WTC11 (cell line): ENCODE measurements at regions of chr17 and their contacts with region 1.

Region 1: DNA sequence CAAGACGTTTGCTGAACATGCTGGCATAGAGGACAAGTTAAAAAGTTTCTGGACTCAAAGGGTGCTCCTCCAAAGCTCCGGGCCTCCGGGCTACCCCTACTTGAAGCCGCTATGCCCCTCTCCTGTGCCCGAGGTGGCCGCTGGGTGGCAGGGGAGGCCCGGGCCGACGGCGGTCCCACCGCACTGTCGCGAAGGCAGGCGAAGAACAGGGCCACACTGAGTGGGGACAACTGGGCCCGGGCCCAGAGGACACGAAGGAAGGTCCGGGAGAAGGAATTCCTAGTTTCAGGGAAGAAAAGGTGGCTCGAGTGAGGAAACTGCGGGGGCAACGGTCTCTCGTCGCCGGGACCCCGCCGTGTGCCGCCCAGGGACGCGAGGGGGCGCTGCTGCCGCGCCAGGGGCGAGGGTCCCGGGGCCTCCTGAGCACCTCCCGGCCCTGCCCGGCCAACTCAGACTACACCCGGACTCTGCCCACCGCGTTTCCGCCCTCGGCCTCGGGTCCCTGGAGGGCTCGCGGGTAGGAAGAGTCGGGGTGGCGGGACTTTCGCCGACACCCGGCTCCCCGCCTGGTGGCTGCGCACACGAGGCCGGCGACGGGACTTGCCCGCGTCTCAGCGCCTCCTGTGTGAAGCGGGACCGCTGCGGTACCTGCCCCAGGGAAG is 885 bp upstream of the CHCT1 start:
- DNase-seq: peak; percentile 81
- ATAC-seq: peak; percentile 91
- H3K4me3 Mint-ChIP-seq: peak overlapping the region; percentile 84
- H3K27ac Mint-ChIP-seq: no peak overlapping the region
- H3K4me1 Mint-ChIP-seq: peaks cover 16% of the 10 kb centered on the region
- H3K27me3 Mint-ChIP-seq: peaks cover 21% of the 10 kb centered on the region
- CTCF ChIP-seq: peak; percentile 96

Region 2: GRCh38 chr17:60231234-60231633 is 190.2 kb before region 1 on chr17:
- CTCF ChIA-PET with region 1: interaction called, 10 read pairs
- POLR2A ChIA-PET with region 1: no interaction called
- DNase-seq: no peak
- ATAC-seq: 0 out of 2 replicates have a peak, but pooled peaks have one; percentile 28
- H3K4me3 Mint-ChIP-seq: no peak overlapping the region
- H3K27ac Mint-ChIP-seq: peak overlapping the region; percentile 82
- H3K4me1 Mint-ChIP-seq: peaks cover 12% of the 10 kb centered on the region
- H3K27me3 Mint-ChIP-seq: no peaks in the 10 kb centered on the region
- CTCF ChIP-seq: no peak

Region 3: GRCh38 chr17:60361889-60362288 is 59.5 kb before region 1 on chr17:
- CTCF ChIA-PET with region 1: no interaction called
- POLR2A ChIA-PET with region 1: no interaction called
- DNase-seq: no peak
- ATAC-seq: no peak
- H3K4me3 Mint-ChIP-seq: no peak overlapping the region
- H3K27ac Mint-ChIP-seq: no peak overlapping the region
- H3K4me1 Mint-ChIP-seq: peaks cover 13% of the 10 kb centered on the region
- H3K27me3 Mint-ChIP-seq: no peaks in the 10 kb centered on the region
- CTCF ChIP-seq: no peak

Region 4: GRCh38 chr17:60392042-60392844 is 29.2 kb before region 1 on chr17 and contains the start of gene USP32:
- CTCF ChIA-PET with region 1: interaction called, 10 read pairs
- POLR2A ChIA-PET with region 1: interaction called, 7 read pairs
- DNase-seq: peak; percentile 98
- ATAC-seq: peak; percentile 95
- H3K4me3 Mint-ChIP-seq: peak within 1 kb of the TSS; percentile 98
- H3K27ac Mint-ChIP-seq: peak within 1 kb of the TSS; percentile 98
- H3K4me1 Mint-ChIP-seq: peaks cover 45% of the 10 kb centered on the region
- H3K27me3 Mint-ChIP-seq: no peaks in the 10 kb centered on the region
- CTCF ChIP-seq: no peak
- total RNA-seq, gene USP32: 91.7 to 103 TPM (median 96.1 TPM) in 3 replicates

Region 5: DNA sequence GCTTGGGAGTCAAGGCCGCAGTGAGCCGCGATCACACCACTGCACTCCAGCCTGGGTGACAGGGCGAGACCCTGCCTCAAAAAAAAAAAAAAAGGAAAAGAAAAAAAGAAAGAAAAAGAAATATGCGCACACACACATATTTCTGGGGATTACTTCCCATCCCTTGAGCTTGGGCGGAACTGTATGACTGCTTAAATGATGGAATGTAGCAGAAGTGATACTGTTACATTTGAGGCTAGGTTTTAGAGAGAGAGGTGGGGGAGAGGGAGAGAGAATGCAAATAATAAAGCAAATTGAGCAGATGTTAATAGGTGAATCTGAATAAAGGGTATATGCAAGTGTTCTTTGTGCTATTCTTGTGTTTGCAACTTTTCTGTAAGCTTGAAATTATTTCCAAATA is 17.4 kb before region 1 on chr17:
- CTCF ChIA-PET with region 1: interaction called, 15 read pairs
- POLR2A ChIA-PET with region 1: no interaction called
- DNase-seq: no peak
- ATAC-seq: no peak
- H3K4me3 Mint-ChIP-seq: no peak overlapping the region
- H3K27ac Mint-ChIP-seq: no peak overlapping the region
- H3K4me1 Mint-ChIP-seq: 0 out of 2 replicates have a peak, but pooled peaks cover 2% of the 10 kb centered on the region
- H3K27me3 Mint-ChIP-seq: no peaks in the 10 kb centered on the region; the same call in 1 of the 2 replicates
- CTCF ChIP-seq: no peak